Activated CD8-positive, alpha-beta memory T cell treated with anti-CD3 and anti-CD28 coated beads, Interleukin-2, amount 10 ng/mL, durations not matched to agents 7 days and 5 days (primary cell): ENCODE measurements at regions of chr10 and their contacts with region 1.

Region 1: GRCh38 chr10:73940634-73941221 is 29.8 kb downstream of the PLAU start:
- DNase-seq: peak; percentile 88
- ATAC-seq: peak; percentile 100
- H3K4me3 Mint-ChIP-seq: no peak overlapping the region
- H3K27ac Mint-ChIP-seq: peak overlapping the region; percentile 80
- H3K4me1 Mint-ChIP-seq: peaks cover 12% of the 10 kb centered on the region
- H3K27me3 Mint-ChIP-seq: peaks cover 11% of the 10 kb centered on the region

Region 2: GRCh38 chr10:73874267-73875138 is 66.2 kb before region 1 on chr10 and contains the start of gene CAMK2G:
- CTCF ChIA-PET with region 1: interaction called, 642 read pairs
- DNase-seq: peak; percentile 91
- ATAC-seq: peak; percentile 93
- H3K4me3 Mint-ChIP-seq: peak within 1 kb of the TSS; percentile 74
- H3K27ac Mint-ChIP-seq: peak within 1 kb of the TSS; percentile 37
- H3K4me1 Mint-ChIP-seq: peaks cover 61% of the 10 kb centered on the region
- H3K27me3 Mint-ChIP-seq: peaks cover 10% of the 10 kb centered on the region
- total RNA-seq, gene CAMK2G: 30.8 to 49.2 TPM

Region 3: GRCh38 chr10:73908853-73909538 is 31.7 kb before region 1 on chr10:
- CTCF ChIA-PET with region 1: interaction called, 28 read pairs
- DNase-seq: peak; percentile 80
- ATAC-seq: peak; percentile 59
- H3K4me3 Mint-ChIP-seq: peak overlapping the region; percentile 71
- H3K27ac Mint-ChIP-seq: peak overlapping the region; percentile 78
- H3K4me1 Mint-ChIP-seq: peaks cover 38% of the 10 kb centered on the region
- H3K27me3 Mint-ChIP-seq: peaks cover 28% of the 10 kb centered on the region

Region 4: GRCh38 chr10:73956476-73957359 is 16.0 kb after region 1 on chr10:
- CTCF ChIA-PET with region 1: interaction called, 33 read pairs
- DNase-seq: peak; percentile 57
- ATAC-seq: peak; percentile 77
- H3K4me3 Mint-ChIP-seq: peak overlapping the region; percentile 31
- H3K27ac Mint-ChIP-seq: peak overlapping the region; percentile 90
- H3K4me1 Mint-ChIP-seq: peaks cover 48% of the 10 kb centered on the region
- H3K27me3 Mint-ChIP-seq: peaks cover 2% of the 10 kb centered on the region

Region 5: DNA sequence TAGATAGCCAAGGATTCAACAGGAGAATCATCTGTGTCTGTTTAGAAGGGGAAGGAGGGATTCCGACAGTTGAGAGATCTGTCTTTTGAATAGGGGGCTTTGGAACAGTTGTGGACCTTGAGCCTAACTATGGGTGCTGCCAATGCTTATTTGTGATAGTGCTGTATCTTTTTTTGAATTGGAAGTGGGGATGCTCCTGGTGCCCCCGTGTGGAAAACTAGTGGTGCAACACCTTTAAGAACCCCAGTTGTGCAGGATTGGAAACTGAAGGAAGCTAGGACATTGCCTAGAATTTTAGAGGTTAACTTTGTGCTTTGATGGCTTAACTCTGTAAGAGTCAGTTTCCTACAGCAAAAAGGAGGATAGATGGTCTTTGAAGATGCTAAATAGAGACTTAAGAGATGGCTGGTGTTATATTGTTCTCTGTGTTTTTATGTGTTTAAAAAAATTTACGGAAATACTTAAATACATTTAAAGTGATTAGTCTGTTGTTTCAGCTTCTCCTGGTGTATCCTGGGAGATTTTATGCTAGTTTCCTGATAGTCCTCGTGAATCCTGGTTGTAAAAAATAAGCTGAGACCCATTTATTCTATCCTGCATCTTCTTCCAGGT is 140.6 kb after region 1 on chr10:
- CTCF ChIA-PET with region 1: interaction called, 23 read pairs
- DNase-seq: peak; percentile 58
- ATAC-seq: peak; percentile 34
- H3K4me3 Mint-ChIP-seq: no peak overlapping the region
- H3K27ac Mint-ChIP-seq: no peak overlapping the region
- H3K4me1 Mint-ChIP-seq: peaks cover 53% of the 10 kb centered on the region
- H3K27me3 Mint-ChIP-seq: no peaks in the 10 kb centered on the region

Region 6: GRCh38 chr10:74384615-74385183 is 444.0 kb after region 1 on chr10:
- CTCF ChIA-PET with region 1: no interaction called
- DNase-seq: no peak
- ATAC-seq: no peak
- H3K4me3 Mint-ChIP-seq: no peak overlapping the region
- H3K27ac Mint-ChIP-seq: no peak overlapping the region
- H3K4me1 Mint-ChIP-seq: peaks cover 9% of the 10 kb centered on the region
- H3K27me3 Mint-ChIP-seq: no peaks in the 10 kb centered on the region